Activated CD4-positive, alpha-beta T cell treated with anti-CD3 and anti-CD28 coated beads for 36 hours (primary cell): ENCODE measurements at regions of chr12 and their contacts with region 1.

Region 1: DNA sequence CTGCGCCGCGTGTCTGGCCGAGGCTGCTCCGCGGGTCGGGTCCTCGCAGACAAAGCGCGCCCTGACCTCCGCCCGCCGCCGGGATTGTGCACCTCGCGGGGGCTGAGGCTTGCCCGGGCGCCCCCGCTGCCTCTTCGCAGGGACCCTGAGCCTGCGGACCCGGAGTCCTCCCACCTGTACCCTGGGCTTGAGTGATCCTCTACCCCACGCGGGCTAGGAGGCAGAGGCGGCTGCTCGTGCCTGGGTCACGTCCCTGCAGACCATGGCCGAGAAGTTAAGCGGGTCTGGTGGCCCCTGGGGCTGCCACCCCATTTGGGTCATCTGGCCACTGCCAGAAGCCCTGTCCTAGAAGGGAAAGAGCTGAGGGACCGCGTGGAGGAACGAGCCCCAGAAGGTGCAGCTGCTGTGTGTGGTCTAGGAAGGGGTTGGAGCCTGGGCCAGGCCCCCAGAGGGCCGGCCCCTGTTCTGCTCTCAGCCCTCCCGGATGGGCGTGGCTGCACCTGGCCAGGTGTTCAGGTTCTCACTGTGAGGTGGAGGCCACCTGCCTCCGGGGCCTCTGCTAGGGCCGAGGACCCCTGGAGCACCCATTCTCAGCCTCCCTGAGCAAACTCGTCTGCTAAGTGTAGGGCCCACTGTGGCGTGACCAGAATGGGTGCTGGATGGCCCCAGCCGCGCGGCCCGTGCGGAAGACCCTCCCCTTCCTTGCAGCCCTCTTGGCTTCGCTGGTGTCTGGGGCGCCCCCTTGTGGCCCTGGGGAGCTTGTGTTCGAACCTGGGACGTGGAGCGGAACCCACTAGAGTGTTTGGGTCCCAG is 49.6 kb downstream of the LRCOL1 start:
- DNase-seq: peak; percentile 90
- ATAC-seq: peak; percentile 74
- H3K4me3 Mint-ChIP-seq: peak overlapping the region; percentile 73
- H3K27ac Mint-ChIP-seq: no peak overlapping the region
- H3K4me1 Mint-ChIP-seq: peaks cover 13% of the 10 kb centered on the region
- H3K27me3 Mint-ChIP-seq: peaks cover 7% of the 10 kb centered on the region

Region 2: DNA sequence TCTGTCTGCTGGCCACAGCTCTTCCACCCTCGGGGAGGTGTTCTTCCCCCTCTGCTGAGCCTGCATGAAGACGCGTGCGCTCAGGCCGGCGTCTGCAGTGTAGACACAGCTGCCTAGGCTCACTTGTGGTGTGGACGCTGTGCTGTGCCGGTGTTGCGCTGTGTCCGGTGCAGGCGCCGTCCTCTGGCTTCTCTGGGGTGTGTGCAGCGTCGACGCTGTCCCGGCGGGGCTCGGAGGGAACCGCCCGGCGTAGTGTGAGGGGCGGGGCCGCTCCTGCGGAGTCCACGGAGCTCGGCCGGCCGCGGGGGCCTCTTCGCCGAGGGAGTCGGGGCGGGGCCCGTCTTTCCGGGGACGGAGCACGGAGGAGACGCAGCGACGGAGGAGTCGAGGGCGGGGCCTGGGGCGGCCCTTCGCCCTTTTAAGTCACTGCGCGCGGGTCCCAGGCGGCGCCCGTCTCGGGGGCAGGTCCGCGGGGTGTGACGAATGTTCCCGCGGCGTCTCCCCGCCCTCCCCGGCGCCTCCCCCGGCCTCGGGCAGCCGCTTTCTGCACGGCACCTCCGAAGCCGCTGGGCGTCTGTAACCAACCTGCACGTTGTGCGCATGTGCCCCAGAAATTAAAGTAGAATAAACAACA is 371.3 kb before region 1 on chr12:
- CTCF ChIA-PET with region 1: no interaction called
- POLR2A ChIA-PET with region 1: no interaction called
- intact Hi-C with region 1: loop called in 1 of 2 experiments (anchors 2 kb)
- DNase-seq: peak; percentile 97
- ATAC-seq: peak; percentile 95
- H3K4me3 Mint-ChIP-seq: peak overlapping the region; percentile 78
- H3K27ac Mint-ChIP-seq: peak overlapping the region; percentile 79
- H3K4me1 Mint-ChIP-seq: peaks cover 28% of the 10 kb centered on the region
- H3K27me3 Mint-ChIP-seq: no peaks in the 10 kb centered on the region

Region 3: GRCh38 chr12:132445884-132446632 is 114.8 kb before region 1 on chr12:
- CTCF ChIA-PET with region 1: no interaction called
- POLR2A ChIA-PET with region 1: no interaction called
- intact Hi-C with region 1: loop called in 1 of 2 experiments (anchors 1 kb)
- DNase-seq: peak; percentile 79
- ATAC-seq: peak; percentile 22
- H3K4me3 Mint-ChIP-seq: peak overlapping the region; percentile 87
- H3K27ac Mint-ChIP-seq: peak overlapping the region; percentile 100
- H3K4me1 Mint-ChIP-seq: peaks cover 45% of the 10 kb centered on the region
- H3K27me3 Mint-ChIP-seq: no peaks in the 10 kb centered on the region

Region 4: GRCh38 chr12:132596016-132596415 is 35.2 kb after region 1 on chr12:
- CTCF ChIA-PET with region 1: no interaction called
- POLR2A ChIA-PET with region 1: no interaction called
- intact Hi-C with region 1: no loop called
- DNase-seq: no peak
- ATAC-seq: no peak
- H3K4me3 Mint-ChIP-seq: no peak overlapping the region
- H3K27ac Mint-ChIP-seq: no peak overlapping the region
- H3K4me1 Mint-ChIP-seq: peaks cover 14% of the 10 kb centered on the region
- H3K27me3 Mint-ChIP-seq: peaks cover 26% of the 10 kb centered on the region

Region 5: GRCh38 chr12:132614861-132615578 is 54.2 kb after region 1 on chr12:
- CTCF ChIA-PET with region 1: interaction called, 8 read pairs
- POLR2A ChIA-PET with region 1: interaction called, 3 read pairs
- intact Hi-C with region 1: loop called in 1 of 2 experiments (anchors 2 kb)
- DNase-seq: peak; percentile 90
- ATAC-seq: peak; percentile 91
- H3K4me3 Mint-ChIP-seq: no peak overlapping the region
- H3K27ac Mint-ChIP-seq: no peak overlapping the region
- H3K4me1 Mint-ChIP-seq: peaks cover 15% of the 10 kb centered on the region
- H3K27me3 Mint-ChIP-seq: peaks cover 33% of the 10 kb centered on the region

Region 6: GRCh38 chr12:132717531-132718387 is 156.9 kb after region 1 on chr12:
- CTCF ChIA-PET with region 1: no interaction called
- POLR2A ChIA-PET with region 1: no interaction called
- intact Hi-C with region 1: no loop called
- DNase-seq: no peak
- ATAC-seq: no peak
- H3K4me3 Mint-ChIP-seq: no peak overlapping the region
- H3K27ac Mint-ChIP-seq: no peak overlapping the region
- H3K4me1 Mint-ChIP-seq: peaks cover 15% of the 10 kb centered on the region
- H3K27me3 Mint-ChIP-seq: no peaks in the 10 kb centered on the region